Calu3 (cell line): ENCODE measurements at regions of chr18 and their contacts with region 1.

Region 1: GRCh38 chr18:3652380-3653262 is 202.6 kb downstream of the TGIF1 start:
- DNase-seq: peak; percentile 90
- H3K4me3 Mint-ChIP-seq: peak overlapping the region; percentile 67
- H3K27ac Mint-ChIP-seq: peak overlapping the region; percentile 100
- H3K4me1 Mint-ChIP-seq: peaks cover 69% of the 10 kb centered on the region
- H3K27me3 Mint-ChIP-seq: peaks cover 12% of the 10 kb centered on the region
- CTCF ChIP-seq: no peak

Region 2: DNA sequence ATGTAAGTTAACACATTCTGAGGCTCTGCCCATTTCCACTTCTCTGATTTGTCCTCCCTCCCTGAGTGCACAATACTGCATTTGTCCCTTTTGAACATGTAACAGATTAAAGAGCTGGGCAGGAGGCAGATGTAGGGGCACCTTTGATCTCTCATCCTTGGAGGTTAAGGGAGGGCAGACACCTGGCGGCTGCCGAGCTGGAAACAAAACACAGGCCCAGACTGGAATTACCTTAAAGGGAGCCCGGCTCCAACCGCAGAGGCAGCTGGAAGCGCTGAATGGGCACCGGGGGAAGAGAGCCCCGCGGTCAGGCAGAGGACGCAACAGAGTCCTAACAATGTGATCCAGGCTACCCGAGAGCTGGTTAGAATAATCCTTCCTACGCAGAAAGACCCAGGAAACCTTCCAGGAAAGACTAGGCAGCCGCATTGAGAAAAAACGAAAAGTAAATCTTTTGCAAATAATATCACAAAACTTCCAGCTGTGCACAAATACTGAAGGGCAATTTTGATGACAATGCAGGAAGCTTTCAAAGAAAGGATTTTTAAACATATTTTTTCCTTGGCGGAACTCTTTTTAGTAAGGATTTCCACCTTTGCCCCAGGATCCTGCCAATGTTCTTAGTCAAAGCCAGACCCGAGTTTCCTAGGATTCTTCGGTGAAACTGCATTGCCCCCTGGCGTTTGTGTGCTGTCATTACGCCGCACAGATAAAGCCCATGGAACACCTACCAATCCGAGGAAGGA is 13.3 kb after region 1 on chr18:
- CTCF ChIA-PET with region 1: interaction called, 30 read pairs
- intact Hi-C with region 1: no loop called
- DNase-seq: peak; percentile 88
- H3K4me3 Mint-ChIP-seq: peak overlapping the region; percentile 55
- H3K27ac Mint-ChIP-seq: peak overlapping the region; percentile 83
- H3K4me1 Mint-ChIP-seq: peaks cover 40% of the 10 kb centered on the region
- H3K27me3 Mint-ChIP-seq: no peaks in the 10 kb centered on the region
- CTCF ChIP-seq: peak; percentile 93

Region 3: DNA sequence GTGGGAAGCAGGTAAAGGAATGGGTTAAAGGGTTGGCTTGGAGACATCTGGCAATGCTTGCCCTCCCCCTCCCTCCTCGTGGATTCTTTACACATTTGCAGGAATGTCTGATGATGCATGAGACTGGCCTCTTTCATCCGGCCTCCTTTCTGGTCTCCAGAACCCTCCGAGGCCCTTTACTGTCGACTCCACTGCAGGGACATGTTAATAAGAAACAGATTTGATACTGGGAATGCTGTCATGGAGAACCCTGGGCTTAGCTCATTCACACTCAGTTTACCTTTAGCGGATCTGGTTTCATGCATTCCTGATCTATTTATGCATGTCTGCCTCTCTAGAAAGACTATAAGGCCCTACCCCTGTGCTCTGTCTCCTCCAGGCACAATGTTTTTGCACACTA is 36.1 kb after region 1 on chr18:
- CTCF ChIA-PET with region 1: no interaction called
- intact Hi-C with region 1: no loop called
- DNase-seq: peak; percentile 55
- H3K4me3 Mint-ChIP-seq: no peak overlapping the region
- H3K27ac Mint-ChIP-seq: no peak overlapping the region
- H3K4me1 Mint-ChIP-seq: peaks cover 28% of the 10 kb centered on the region
- H3K27me3 Mint-ChIP-seq: no peaks in the 10 kb centered on the region
- CTCF ChIP-seq: no peak